ENCODE measurements at regions of chr12 and their contacts with region 1.

Region 1: GRCh38 chr12:17609153-17609552 is 480.8 kb downstream of the RERGL start:
- DNase-seq: no peak
- H3K4me3 ChIP-seq: no peak overlapping the region
- CTCF ChIP-seq: no peak

Region 2: GRCh38 chr12:17550011-17550410 is 59.1 kb before region 1 on chr12:
- in situ Hi-C with region 1: loop called (anchors 5 kb)
- DNase-seq: no peak
- H3K4me3 ChIP-seq: no peak overlapping the region
- CTCF ChIP-seq: no peak

Region 3: GRCh38 chr12:17661250-17661649 is 52.1 kb after region 1 on chr12:
- in situ Hi-C with region 1: no loop called
- DNase-seq: no peak
- H3K4me3 ChIP-seq: no peak overlapping the region
- CTCF ChIP-seq: no peak